Transverse colon (tissue), 4 donors: ENCODE measurements at regions of chr22 and their contacts with region 1.

Region 1: GRCh38 chr22:43363315-43364168 is 20.4 kb upstream of the SCUBE1 start:
- DNase-seq: no peak
- H3K4me3 ChIP-seq: no peak overlapping the region
- H3K27ac ChIP-seq: no peak overlapping the region
- H3K4me1 ChIP-seq: no peaks in the 10 kb centered on the region
- H3K27me3 ChIP-seq: peaks cover 9% of the 10 kb centered on the region
- CTCF ChIP-seq: no peak
- EP300 ChIP-seq: no peak
- POLR2A ChIP-seq: no peak

Region 2: DNA sequence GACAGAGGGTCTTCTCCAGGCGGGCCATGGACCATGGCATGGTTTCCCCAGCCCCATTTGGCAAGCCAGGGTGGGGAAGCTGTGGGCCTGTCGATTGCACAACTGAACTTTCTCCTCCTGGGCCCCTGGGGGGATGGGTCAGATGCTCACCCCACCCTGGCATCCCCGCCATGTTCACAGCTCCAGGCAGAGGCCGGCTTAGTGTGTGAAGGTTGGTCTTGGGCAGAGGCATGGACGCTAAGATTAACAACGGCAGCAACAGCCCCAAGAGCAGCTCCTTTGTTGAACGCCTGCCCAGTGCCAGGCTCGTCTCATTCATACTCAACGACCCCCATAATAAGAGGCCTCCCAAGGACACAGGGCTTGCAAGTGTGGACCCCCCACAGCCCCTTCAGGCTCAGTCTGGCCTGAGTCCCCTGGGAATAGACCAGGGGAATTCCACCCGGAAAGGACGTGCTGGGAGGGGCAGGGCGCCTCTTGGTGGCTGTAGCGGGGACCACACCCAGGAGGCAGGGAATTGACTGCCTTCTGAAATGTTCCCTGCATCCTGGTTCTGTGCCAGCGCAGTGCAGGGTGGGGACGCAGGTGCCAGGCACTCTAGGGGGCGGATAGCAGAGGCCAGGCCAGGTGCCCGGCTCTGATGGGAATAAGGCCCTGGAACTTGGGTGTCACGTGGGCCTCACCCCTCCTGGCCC is 203.9 kb before region 1 on chr22:
- in situ Hi-C with region 1: no loop called
- intact Hi-C with region 1: no loop called
- DNase-seq: peak; percentile 92
- H3K4me3 ChIP-seq: no peak overlapping the region
- H3K27ac ChIP-seq: peak overlapping the region; percentile 70 to 83 (median 76)
- H3K4me1 ChIP-seq: peaks cover 13 to 57% (median 48%) of the 10 kb centered on the region in 4 donors
- H3K27me3 ChIP-seq: no peaks in the 10 kb centered on the region
- CTCF ChIP-seq: peak; percentile 36 to 79 (median 65)
- EP300 ChIP-seq: no peak
- POLR2A ChIP-seq: no peak

Region 3: GRCh38 chr22:43431808-43432554 is 68.4 kb after region 1 on chr22:
- in situ Hi-C with region 1: no loop called
- intact Hi-C with region 1: loop called (anchors 2 kb)
- DNase-seq: no peak
- H3K4me3 ChIP-seq: no peak overlapping the region
- H3K27ac ChIP-seq: no peak overlapping the region
- H3K4me1 ChIP-seq: no peaks in the 10 kb centered on the region
- H3K27me3 ChIP-seq: peaks cover 50% of the 10 kb centered on the region
- CTCF ChIP-seq: no peak
- EP300 ChIP-seq: no peak
- POLR2A ChIP-seq: no peak

Region 4: GRCh38 chr22:43777049-43777685 is 413.6 kb after region 1 on chr22:
- in situ Hi-C with region 1: no loop called
- intact Hi-C with region 1: no loop called
- DNase-seq: no peak
- H3K4me3 ChIP-seq: no peak overlapping the region
- H3K27ac ChIP-seq: no peak overlapping the region
- H3K4me1 ChIP-seq: no peaks in the 10 kb centered on the region
- H3K27me3 ChIP-seq: no peaks in the 10 kb centered on the region
- CTCF ChIP-seq: no peak
- EP300 ChIP-seq: no peak
- POLR2A ChIP-seq: no peak